ENCODE measurements at regions of chr15 and their contacts with region 1.

Region 1: DNA sequence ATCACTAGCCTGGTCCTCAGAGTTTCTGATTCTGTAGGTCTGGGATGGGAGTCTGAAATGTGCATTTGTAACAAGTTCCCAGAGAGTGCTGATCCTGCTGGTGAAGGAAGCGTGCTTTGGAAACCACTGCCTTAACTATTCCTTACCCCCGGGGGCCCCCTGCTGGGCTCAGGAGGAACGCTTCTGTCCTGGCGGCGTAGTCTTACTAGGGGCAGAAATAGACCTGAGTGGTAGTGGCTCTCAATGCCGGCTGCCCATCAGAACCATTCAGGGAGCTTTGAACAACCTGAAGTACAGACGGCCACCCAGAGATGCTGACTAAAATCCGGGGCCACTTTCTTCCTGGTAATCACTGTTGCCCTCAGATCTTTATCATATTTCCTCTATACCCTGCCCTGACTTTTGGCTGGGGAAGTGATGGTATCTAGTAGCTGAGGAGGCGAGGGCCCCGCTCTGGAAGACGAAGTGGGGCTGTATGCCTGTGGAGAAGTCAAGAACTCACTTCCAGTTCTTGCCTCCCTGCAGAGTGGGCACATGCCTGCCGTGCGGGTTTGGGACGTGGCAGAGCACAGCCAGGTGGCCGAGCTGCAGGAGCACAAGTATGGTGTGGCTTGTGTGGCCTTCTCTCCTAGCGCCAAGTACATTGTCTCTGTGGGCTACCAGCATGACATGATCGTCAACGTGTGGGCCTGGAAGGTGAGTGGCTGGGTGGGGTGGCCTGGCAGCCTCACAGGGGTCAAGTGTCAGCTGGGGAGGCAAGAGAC is 16.3 kb upstream of the JMJD7 start:
- DNase-seq: peak; percentile 85
- ATAC-seq: peak; percentile 98
- H3K4me3 ChIP-seq: no peak overlapping the region
- H3K27ac ChIP-seq: no peak overlapping the region
- H3K4me1 ChIP-seq: peaks cover 3 to 4% of the 10 kb centered on the region in 2 experiments; a peak in 3 of 5 replicates
- H3K27me3 ChIP-seq: no peaks in the 10 kb centered on the region
- CTCF ChIP-seq: peak; percentile 93 to 96 (median 96)
- EP300 ChIP-seq: no peak
- POLR2A ChIP-seq: no peak
- RAD21 ChIP-seq: peak; percentile 93 to 97

Region 2: DNA sequence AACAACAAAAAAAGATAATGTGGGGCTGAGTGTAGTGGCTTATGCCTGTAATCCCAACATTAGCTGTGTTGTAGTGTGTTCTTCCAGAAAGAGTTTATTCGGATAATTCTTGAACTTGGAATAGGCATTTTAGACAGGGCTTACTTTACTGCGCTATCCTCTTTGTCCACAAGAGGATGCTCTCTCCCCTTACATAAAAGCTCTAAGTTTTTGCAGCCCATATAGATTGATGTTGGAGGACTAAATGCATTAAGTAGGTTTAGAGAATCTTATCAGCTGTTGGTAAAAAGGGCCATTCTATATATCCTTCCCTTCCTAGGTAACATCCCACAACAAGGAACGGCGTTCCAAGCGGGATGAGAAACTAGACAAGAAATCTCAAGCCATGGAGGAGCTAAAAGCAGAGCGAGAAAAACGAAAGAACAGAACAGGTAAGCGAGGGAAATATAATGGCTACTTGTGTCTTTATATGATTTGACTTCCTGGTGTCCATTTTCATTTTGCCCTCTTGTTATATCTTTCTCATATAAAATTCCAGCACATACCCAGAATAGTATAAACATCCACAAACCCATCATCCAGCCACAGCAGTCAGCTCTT is 345.7 kb before region 1 on chr15:
- CTCF ChIA-PET with region 1: interaction called, 17 read pairs
- POLR2A ChIA-PET with region 1: interaction called, 4 read pairs
- in situ Hi-C with region 1: loop called (anchors 25 kb)
- intact Hi-C with region 1: loop called (anchors 2 kb)
- DNase-seq: peak; percentile 39 to 69 (median 48)
- ATAC-seq: peak; percentile 89
- H3K4me3 ChIP-seq: no peak overlapping the region
- H3K27ac ChIP-seq: no peak overlapping the region
- H3K4me1 ChIP-seq: no peaks in the 10 kb centered on the region
- H3K27me3 ChIP-seq: no peaks in the 10 kb centered on the region
- CTCF ChIP-seq: peak; percentile 72 to 98 (median 92)
- EP300 ChIP-seq: no peak
- POLR2A ChIP-seq: no peak
- RAD21 ChIP-seq: peak; percentile 90 to 97

Region 3: DNA sequence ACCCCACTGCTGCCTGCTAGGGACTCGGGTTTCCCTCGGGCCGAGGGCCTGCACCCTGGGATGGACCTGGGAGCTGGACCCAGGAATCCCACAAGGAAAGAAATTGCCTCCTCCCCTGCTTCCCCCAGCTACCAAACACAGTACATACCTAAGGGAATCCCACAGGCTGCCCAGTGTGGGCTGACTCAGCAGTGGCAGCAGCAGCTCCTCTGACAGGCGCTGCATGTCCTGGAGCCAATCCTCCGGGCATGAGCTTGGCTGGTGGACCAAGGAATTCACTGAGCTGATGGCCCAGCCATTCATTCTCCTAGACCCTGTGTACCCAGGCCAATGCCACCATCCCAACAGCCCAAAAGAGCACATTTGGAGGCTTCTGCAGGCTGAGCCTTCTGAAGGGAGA is 288.5 kb before region 1 on chr15:
- CTCF ChIA-PET with region 1: no interaction called
- POLR2A ChIA-PET with region 1: no interaction called
- in situ Hi-C with region 1: no loop called
- intact Hi-C with region 1: no loop called
- DNase-seq: no peak
- ATAC-seq: no peak; the same call in 2 of the 3 replicates
- H3K4me3 ChIP-seq: no peak overlapping the region
- H3K27ac ChIP-seq: no peak overlapping the region
- H3K4me1 ChIP-seq: peaks cover 0 to 7% of the 10 kb centered on the region in 2 experiments; a peak in 1 of 5 replicates
- H3K27me3 ChIP-seq: no peaks in the 10 kb centered on the region
- CTCF ChIP-seq: no peak
- EP300 ChIP-seq: no peak
- POLR2A ChIP-seq: no peak
- RAD21 ChIP-seq: no peak

Region 4: DNA sequence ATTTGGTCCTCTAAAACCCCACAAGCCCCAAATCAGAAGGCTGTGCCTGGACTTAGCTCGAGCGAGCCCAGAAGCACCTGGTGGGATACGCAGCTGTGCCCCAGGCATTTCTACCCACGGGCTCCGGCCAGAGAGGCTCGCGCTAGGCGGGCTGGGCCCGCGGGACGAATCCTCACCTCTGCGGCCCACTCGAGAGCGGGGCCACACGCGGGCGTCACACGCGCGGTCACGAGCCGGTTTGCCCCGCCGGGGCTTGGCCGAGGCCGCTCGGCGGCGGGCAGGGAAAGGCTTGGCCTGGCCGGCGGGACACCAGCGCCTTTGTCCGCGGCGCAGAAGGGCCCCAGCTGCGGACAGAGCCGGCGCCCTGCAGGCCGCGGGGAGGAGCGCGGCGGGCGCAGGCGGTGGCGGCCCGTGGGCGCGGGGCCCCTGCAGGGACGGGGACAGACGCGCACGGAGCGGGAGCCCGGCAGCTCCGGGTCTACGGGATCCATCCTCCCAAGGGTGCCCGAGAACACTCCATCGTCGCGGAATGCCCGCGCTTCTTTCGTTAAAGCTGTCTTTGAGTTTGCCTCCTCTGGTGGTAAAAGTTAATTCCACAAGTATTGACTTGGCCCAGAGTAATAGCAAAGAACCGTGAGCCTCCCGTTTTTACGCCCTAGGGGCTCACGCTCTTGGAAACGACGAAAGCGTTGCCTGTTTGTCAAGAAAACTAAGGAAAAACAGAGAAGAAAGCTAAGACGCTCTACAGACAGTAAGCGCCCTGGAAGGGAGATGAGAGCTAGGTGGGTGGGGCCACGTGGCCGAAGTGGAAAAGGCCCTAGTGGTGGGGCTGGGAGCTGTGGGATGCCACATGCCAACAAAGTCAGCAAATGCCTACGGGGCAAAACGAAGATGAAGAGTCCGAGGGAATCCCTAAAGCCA is 226.2 kb before region 1 on chr15:
- CTCF ChIA-PET with region 1: interaction called, 12 read pairs
- POLR2A ChIA-PET with region 1: no interaction called
- in situ Hi-C with region 1: no loop called
- intact Hi-C with region 1: no loop called
- DNase-seq: no peak
- ATAC-seq: no peak
- H3K4me3 ChIP-seq: no peak overlapping the region
- H3K27ac ChIP-seq: no peak overlapping the region
- H3K4me1 ChIP-seq: no peaks in the 10 kb centered on the region; a peak in 1 of 5 replicates
- H3K27me3 ChIP-seq: no peaks in the 10 kb centered on the region
- CTCF ChIP-seq: no peak
- EP300 ChIP-seq: no peak
- POLR2A ChIP-seq: no peak
- RAD21 ChIP-seq: no peak

Region 5: DNA sequence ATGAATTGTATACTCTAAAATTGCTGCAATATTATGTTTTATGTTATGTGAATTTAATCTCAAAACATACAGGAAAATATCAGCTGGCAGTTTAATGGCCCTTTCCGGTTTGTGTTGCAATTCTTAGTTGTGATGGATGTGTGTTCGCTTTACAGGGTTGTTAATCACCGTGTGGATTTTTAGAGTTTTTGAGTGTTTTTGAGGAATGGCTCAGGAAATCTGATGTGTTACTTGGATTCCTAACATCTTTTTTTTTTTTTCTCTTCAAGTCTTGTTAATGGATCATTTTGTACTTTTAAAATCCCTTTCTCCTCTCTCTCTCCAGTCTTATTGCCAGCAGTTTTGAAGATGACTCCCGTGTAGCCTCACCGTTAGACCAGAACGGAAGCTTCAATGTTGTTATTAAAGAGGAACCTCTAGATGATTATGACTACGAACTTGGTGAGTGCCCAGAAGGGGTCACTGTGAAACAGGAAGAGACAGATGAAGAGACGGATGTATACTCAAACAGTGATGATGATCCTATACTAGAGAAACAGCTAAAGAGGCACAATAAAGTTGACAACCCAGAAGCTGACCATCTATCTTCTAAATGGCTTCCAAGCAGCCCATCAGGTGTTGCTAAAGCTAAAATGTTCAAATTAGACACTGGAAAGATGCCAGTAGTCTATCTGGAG is 115.7 kb before region 1 on chr15:
- CTCF ChIA-PET with region 1: interaction called, 4 read pairs
- POLR2A ChIA-PET with region 1: no interaction called
- in situ Hi-C with region 1: no loop called
- intact Hi-C with region 1: loop called (anchors 2 kb)
- DNase-seq: peak; percentile 18 to 55 (median 23)
- ATAC-seq: peak; percentile 91
- H3K4me3 ChIP-seq: no peak overlapping the region
- H3K27ac ChIP-seq: no peak overlapping the region
- H3K4me1 ChIP-seq: peaks cover 0 to 10% of the 10 kb centered on the region in 2 experiments; a peak in 2 of 5 replicates
- H3K27me3 ChIP-seq: no peaks in the 10 kb centered on the region
- CTCF ChIP-seq: peak; percentile 29 to 66 (median 65); a peak in 4 of 6 replicates
- EP300 ChIP-seq: no peak
- POLR2A ChIP-seq: no peak
- RAD21 ChIP-seq: peak; percentile 38 to 58

Region 6: DNA sequence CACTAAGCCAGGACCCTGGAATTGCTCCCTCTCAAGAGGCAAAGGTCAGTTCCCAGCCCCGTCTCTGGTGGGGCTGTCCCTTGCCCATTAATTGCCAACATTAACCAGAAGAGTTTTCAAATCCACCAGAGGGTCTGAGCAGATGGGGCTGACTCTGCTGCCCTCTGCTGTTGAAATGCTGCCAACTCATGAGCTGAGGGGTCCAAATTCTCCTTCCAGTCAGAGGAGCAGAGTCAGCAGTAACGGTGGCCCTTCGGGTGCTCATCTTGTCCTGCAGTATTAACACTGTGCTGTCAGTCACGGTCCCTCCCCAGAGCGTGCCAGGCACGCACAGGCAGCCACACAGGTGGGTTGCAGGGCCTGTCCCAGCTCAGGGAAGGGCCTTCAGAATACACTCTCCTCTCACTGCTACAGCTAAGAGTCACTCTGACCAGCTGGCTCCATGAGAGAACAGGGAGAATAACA is 93.0 kb after region 1 on chr15:
- CTCF ChIA-PET with region 1: interaction called, 3 read pairs
- POLR2A ChIA-PET with region 1: no interaction called
- in situ Hi-C with region 1: no loop called
- intact Hi-C with region 1: loop called (anchors 5 kb)
- DNase-seq: peak; percentile 70 to 81 (median 73)
- ATAC-seq: peak; percentile 98
- H3K4me3 ChIP-seq: no peak overlapping the region
- H3K27ac ChIP-seq: no peak overlapping the region
- H3K4me1 ChIP-seq: peaks cover 0 to 4% of the 10 kb centered on the region in 2 experiments; a peak in 1 of 5 replicates
- H3K27me3 ChIP-seq: no peaks in the 10 kb centered on the region
- CTCF ChIP-seq: peak; percentile 89 to 91 (median 89)
- EP300 ChIP-seq: no peak
- POLR2A ChIP-seq: no peak
- RAD21 ChIP-seq: peak; percentile 61 to 88

Region 7: DNA sequence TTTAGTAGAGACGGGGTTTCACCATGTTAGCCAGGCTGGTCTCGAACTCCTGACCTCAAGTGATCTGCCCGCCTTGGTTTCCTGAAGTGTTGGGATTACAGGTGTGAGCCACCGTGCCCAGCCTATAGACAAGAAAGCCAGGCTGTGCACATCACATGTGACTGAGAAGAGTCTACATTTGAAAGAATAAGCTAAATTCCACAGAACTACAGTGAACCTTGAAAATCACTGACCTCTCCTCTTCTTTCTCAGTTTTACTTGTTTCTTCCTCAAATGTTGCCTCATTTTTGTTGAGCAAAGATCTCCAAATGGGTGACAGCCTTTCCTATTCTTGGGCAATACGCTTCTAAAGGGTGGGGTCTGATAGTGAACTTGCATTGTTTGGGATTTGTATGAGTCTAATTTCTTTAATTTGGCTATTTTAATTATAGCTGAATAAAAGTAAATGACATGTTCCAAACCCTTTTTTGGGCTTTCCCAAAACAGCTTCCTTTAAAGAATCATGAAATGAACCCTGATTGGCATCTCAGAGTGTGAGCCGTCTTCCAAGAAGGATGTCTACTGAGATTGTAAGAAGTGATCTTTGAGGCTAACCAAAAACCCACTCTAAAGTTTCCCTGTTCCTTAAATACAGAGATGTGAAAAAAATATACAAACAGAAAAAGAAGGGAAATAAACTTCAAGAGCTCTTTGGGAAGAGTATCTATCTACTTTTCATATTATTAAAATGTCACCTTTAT is 103.8 kb after region 1 on chr15:
- CTCF ChIA-PET with region 1: no interaction called
- POLR2A ChIA-PET with region 1: no interaction called
- in situ Hi-C with region 1: no loop called
- intact Hi-C with region 1: no loop called
- DNase-seq: no peak
- ATAC-seq: no peak
- H3K4me3 ChIP-seq: no peak overlapping the region
- H3K27ac ChIP-seq: no peak overlapping the region
- H3K4me1 ChIP-seq: peaks cover 9 to 11% of the 10 kb centered on the region in 2 experiments; a peak in 4 of 5 replicates
- H3K27me3 ChIP-seq: no peaks in the 10 kb centered on the region
- CTCF ChIP-seq: no peak
- EP300 ChIP-seq: no peak
- POLR2A ChIP-seq: no peak
- RAD21 ChIP-seq: no peak

Region 8: GRCh38 chr15:41989934-41990605 is 178.5 kb after region 1 on chr15:
- CTCF ChIA-PET with region 1: no interaction called
- POLR2A ChIA-PET with region 1: no interaction called
- in situ Hi-C with region 1: no loop called
- intact Hi-C with region 1: no loop called
- DNase-seq: no peak
- ATAC-seq: peak; percentile 14
- H3K4me3 ChIP-seq: no peak overlapping the region
- H3K27ac ChIP-seq: no peak overlapping the region
- H3K4me1 ChIP-seq: peaks cover 0 to 5% of the 10 kb centered on the region in 2 experiments; a peak in 1 of 5 replicates
- H3K27me3 ChIP-seq: peaks cover 43 to 72% of the 10 kb centered on the region in 2 experiments; a peak in 4 of 5 replicates
- CTCF ChIP-seq: no peak
- EP300 ChIP-seq: no peak
- POLR2A ChIP-seq: no peak
- RAD21 ChIP-seq: no peak